ENCODE measurements at regions of chr1 and their contacts with region 1.

Region 1: DNA sequence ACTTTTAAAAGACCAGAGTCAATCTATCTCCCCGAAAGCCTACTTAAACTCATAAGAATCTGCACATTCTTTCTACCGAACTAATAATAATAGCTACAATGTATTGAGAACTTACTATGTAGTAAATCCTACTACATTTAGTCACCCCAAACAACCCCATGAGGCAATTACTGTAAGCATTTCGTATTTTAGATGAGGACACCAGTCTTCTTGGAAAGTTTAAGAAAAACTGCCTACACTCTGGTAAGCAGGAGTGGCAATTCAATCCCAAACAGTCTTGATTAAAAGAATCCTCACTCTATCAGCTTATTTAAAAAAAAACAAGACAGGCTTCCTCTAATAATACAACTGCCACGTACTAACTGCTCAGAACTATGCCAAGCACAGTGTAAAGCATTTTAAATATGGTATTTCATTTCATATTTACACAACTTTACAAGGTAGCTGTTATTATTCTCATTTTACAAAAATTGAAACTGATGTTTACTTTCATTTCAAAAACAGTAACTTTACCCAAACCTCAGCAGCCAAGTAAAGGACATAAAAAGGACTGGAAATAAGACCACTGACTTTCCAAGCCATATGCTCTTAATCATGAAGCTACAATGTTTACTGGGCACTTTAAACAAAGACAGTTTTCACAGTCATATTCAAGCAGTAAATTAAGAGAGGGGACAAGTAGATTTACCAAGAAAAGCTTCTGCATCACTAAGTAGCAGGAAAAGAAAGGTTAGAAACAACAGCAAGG is 13.9 kb downstream of the ARID4B start:
- DNase-seq: no peak
- H3K4me3 ChIP-seq: no peak overlapping the region
- H3K27ac ChIP-seq: no peak overlapping the region
- H3K4me1 ChIP-seq: peaks cover 2% of the 10 kb centered on the region
- H3K27me3 ChIP-seq: no peaks in the 10 kb centered on the region
- CTCF ChIP-seq: no peak
- POLR2A ChIP-seq: no peak

Region 2: GRCh38 chr1:235190431-235190830 is 123.7 kb before region 1 on chr1:
- CTCF ChIA-PET with region 1: no interaction called
- POLR2A ChIA-PET with region 1: no interaction called
- dilution Hi-C with region 1: no loop called
- intact Hi-C with region 1: no loop called
- DNase-seq: no peak
- H3K4me3 ChIP-seq: no peak overlapping the region
- H3K27ac ChIP-seq: no peak overlapping the region
- H3K4me1 ChIP-seq: no peaks in the 10 kb centered on the region
- H3K27me3 ChIP-seq: no peaks in the 10 kb centered on the region
- CTCF ChIP-seq: no peak
- POLR2A ChIP-seq: no peak

Region 3: GRCh38 chr1:235215453-235215852 is 98.7 kb before region 1 on chr1:
- CTCF ChIA-PET with region 1: no interaction called
- POLR2A ChIA-PET with region 1: no interaction called
- dilution Hi-C with region 1: no loop called
- intact Hi-C with region 1: no loop called
- DNase-seq: no peak
- H3K4me3 ChIP-seq: no peak overlapping the region
- H3K27ac ChIP-seq: no peak overlapping the region
- H3K4me1 ChIP-seq: no peaks in the 10 kb centered on the region
- H3K27me3 ChIP-seq: no peaks in the 10 kb centered on the region
- CTCF ChIP-seq: no peak
- POLR2A ChIP-seq: no peak

Region 4: DNA sequence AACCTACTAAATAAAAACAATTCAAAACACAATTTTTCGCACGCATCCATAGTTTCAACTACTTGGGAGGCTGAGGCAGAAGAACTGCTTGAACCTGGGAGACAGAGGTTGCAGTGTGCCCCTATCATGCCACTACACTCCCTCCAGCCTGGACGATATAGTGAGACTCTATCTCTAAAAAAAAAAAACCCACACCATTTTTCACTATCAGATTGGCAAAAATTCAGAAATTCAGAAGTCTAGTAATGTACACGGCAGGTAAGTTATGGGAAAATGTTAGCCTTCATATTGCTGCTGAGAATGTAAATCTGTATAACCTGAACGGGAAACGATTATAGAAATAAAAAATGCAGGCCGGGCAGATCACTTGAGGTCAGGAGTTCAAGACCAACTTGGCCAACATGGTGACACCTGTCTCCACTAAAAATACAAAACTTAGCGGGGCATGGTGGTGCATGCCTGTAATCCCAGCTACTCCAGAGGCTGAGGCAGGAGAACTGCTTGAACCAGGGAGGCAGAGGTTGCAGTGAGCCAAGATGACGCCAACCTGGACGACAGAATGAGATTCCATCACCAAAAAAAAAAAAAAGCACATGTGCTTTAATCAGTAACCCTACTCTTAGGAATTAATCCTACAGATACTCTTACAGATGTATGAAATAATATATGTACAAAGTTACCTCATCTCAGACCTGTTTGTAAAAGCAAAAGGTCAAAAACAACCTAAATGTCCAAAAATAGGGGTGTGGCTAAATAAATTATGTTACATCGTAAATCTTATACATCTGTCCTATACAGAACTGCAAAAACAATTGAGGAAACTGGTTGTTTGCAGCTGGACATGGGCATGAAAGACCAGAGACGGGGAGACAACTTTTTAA is 24.0 kb before region 1 on chr1:
- CTCF ChIA-PET with region 1: no interaction called
- POLR2A ChIA-PET with region 1: no interaction called
- dilution Hi-C with region 1: no loop called
- intact Hi-C with region 1: loop called (anchors 2 kb)
- DNase-seq: no peak
- H3K4me3 ChIP-seq: no peak overlapping the region
- H3K27ac ChIP-seq: no peak overlapping the region
- H3K4me1 ChIP-seq: no peaks in the 10 kb centered on the region
- H3K27me3 ChIP-seq: no peaks in the 10 kb centered on the region
- CTCF ChIP-seq: no peak
- POLR2A ChIP-seq: no peak

Region 5: DNA sequence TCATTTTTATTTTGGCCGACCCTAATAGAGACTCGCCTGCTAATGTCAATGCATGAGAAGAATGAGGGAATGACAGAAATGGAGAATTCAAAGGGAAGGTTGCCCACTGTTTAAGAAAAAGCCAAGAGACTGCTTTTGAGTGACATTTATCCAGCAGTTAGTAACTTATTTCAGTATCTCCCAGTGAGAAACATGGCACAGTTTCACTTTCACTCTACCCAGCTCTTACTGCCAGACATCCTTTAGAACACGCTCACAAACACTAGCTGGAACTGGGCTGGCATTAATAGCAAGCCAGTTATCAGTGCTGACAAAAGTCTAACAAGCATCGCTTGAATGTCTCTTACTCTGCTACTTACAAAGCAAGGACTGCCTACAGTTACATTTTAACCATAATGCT is 22.8 kb after region 1 on chr1:
- CTCF ChIA-PET with region 1: no interaction called
- POLR2A ChIA-PET with region 1: no interaction called
- dilution Hi-C with region 1: no loop called
- intact Hi-C with region 1: no loop called
- DNase-seq: no peak
- H3K4me3 ChIP-seq: no peak overlapping the region
- H3K27ac ChIP-seq: no peak overlapping the region
- H3K4me1 ChIP-seq: no peaks in the 10 kb centered on the region
- H3K27me3 ChIP-seq: no peaks in the 10 kb centered on the region
- CTCF ChIP-seq: no peak
- POLR2A ChIP-seq: no peak

Region 6: DNA sequence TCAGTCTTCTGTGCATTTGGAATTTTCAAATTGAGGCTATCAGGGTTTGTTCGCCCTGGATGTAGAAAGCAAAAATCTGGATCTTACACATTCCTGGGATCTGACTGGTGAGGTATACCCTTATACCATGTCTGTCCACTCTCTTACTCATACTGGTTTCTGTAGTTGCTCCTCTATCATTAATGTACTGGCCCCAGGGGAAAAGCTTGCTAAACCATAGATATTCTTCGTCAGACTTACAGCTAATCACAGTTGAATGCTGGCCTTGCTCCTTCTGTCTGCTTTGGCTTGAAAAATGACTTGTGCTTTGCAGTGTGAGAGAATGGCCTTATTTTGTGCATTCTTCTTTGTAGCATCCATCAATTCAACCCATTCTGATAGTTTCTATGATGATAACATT is 83.6 kb after region 1 on chr1:
- CTCF ChIA-PET with region 1: no interaction called
- POLR2A ChIA-PET with region 1: no interaction called
- dilution Hi-C with region 1: no loop called
- intact Hi-C with region 1: no loop called
- DNase-seq: no peak
- H3K4me3 ChIP-seq: no peak overlapping the region
- H3K27ac ChIP-seq: no peak overlapping the region
- H3K4me1 ChIP-seq: no peaks in the 10 kb centered on the region
- H3K27me3 ChIP-seq: no peaks in the 10 kb centered on the region
- CTCF ChIP-seq: no peak
- POLR2A ChIP-seq: no peak

Measured in endothelial cell of umbilical vein (primary cell).